Psoas muscle (tissue), 8 donors: ENCODE measurements at regions of chr11 and their contacts with region 1.

Region 1: DNA sequence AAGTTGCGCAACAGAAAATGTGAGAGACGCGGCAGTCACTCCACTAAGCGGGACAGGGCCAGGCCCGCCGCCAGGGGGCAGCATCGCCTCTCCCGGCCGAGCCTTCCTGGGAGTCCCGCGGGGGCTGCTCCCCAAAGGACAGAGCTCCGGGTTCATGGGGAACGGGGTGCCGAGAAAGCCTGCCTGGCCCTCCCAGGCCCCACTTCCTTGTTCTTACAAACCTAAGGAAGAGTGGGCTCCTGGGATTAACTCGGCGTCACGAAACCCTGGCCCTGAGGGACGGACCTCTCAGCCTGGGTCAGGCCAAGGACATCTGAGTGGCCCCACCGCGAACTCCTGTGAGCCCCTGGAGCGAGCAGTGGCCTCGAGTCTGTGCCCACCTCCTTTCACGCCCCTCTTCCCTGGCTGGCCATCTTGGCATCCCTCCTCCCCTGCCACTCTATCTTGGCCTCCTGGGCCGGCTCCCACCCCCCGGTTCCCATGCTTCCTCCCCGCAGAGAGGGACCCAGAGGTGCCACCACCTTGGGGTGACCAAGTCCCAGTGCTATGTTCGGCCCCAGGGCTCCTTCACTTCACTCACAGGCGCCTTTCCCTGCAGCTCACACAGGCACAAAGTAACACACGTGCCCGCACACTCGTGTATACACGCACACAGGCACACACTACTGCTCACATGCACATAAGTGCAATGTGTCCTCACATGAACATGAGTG is 99.9 kb upstream of the FGF3 start:
- DNase-seq: peak; percentile 82 to 88
- ATAC-seq: peak; percentile 79 to 91 (median 82)
- H3K4me3 ChIP-seq: peak overlapping the region; percentile 16
- H3K27ac ChIP-seq: peak overlapping the region; percentile 41
- H3K4me1 ChIP-seq: peaks cover 7% of the 10 kb centered on the region
- H3K27me3 ChIP-seq: peaks cover 0 to 14% (median 3%) of the 10 kb centered on the region in 3 donors
- CTCF ChIP-seq: peak; percentile 90

Region 2: GRCh38 chr11:69848201-69848600 is 70.9 kb before region 1 on chr11:
- intact Hi-C with region 1: no loop called
- DNase-seq: no peak
- ATAC-seq: no peak
- H3K4me3 ChIP-seq: no peak overlapping the region
- H3K27ac ChIP-seq: no peak overlapping the region
- H3K4me1 ChIP-seq: no peaks in the 10 kb centered on the region
- H3K27me3 ChIP-seq: peaks cover 4 to 41% (median 8%) of the 10 kb centered on the region in 3 donors
- CTCF ChIP-seq: no peak

Region 3: GRCh38 chr11:69962152-69962551 is 43.1 kb after region 1 on chr11:
- intact Hi-C with region 1: no loop called
- DNase-seq: no peak
- ATAC-seq: peak in 1 of 4 donors; percentile 31
- H3K4me3 ChIP-seq: no peak overlapping the region
- H3K27ac ChIP-seq: no peak overlapping the region
- H3K4me1 ChIP-seq: no peaks in the 10 kb centered on the region
- H3K27me3 ChIP-seq: peaks cover 0 to 28% (median 6%) of the 10 kb centered on the region in 3 donors
- CTCF ChIP-seq: no peak

Region 4: GRCh38 chr11:70078095-70078795 is 159.2 kb after region 1 on chr11 and contains the start of gene ANO1:
- intact Hi-C with region 1: loop called in 1 of 2 experiments (anchors 5 kb)
- DNase-seq: no peak
- ATAC-seq: peak in 3 of 4 donors; percentile 19 to 61 (median 31)
- H3K4me3 ChIP-seq: peak within 1 kb of the TSS; percentile 58
- H3K27ac ChIP-seq: peak within 1 kb of the TSS; percentile 50
- H3K4me1 ChIP-seq: no peaks in the 10 kb centered on the region
- H3K27me3 ChIP-seq: peaks cover 0 to 47% (median 3%) of the 10 kb centered on the region in 3 donors
- CTCF ChIP-seq: no peak
- total RNA-seq, gene ANO1: 5.1 to 11.3 (median 11.3) TPM

Region 5: GRCh38 chr11:70191495-70192140 is 272.5 kb after region 1 on chr11:
- intact Hi-C with region 1: loop called (anchors 1 to 2 kb)
- DNase-seq: peak; percentile 74 to 88
- ATAC-seq: peak; percentile 87 to 94 (median 92)
- H3K4me3 ChIP-seq: no peak overlapping the region
- H3K27ac ChIP-seq: no peak overlapping the region
- H3K4me1 ChIP-seq: no peaks in the 10 kb centered on the region
- H3K27me3 ChIP-seq: peaks cover 0 to 15% (median 0%) of the 10 kb centered on the region in 3 donors
- CTCF ChIP-seq: peak; percentile 85